ENCODE measurements at regions of chr19 and their contacts with region 1.

Region 1: GRCh38 chr19:18281082-18282020 is at the start of gene JUND:
- DNase-seq: peak; percentile 98
- H3K4me3 Mint-ChIP-seq: peak within 1 kb of the TSS; percentile 92
- H3K27ac Mint-ChIP-seq: peak within 1 kb of the TSS; percentile 98
- H3K4me1 Mint-ChIP-seq: peaks cover 39% of the 10 kb centered on the region
- H3K27me3 Mint-ChIP-seq: no peaks in the 10 kb centered on the region
- total RNA-seq, gene JUND: 462 and 464 TPM in 2 replicates

Region 2: DNA sequence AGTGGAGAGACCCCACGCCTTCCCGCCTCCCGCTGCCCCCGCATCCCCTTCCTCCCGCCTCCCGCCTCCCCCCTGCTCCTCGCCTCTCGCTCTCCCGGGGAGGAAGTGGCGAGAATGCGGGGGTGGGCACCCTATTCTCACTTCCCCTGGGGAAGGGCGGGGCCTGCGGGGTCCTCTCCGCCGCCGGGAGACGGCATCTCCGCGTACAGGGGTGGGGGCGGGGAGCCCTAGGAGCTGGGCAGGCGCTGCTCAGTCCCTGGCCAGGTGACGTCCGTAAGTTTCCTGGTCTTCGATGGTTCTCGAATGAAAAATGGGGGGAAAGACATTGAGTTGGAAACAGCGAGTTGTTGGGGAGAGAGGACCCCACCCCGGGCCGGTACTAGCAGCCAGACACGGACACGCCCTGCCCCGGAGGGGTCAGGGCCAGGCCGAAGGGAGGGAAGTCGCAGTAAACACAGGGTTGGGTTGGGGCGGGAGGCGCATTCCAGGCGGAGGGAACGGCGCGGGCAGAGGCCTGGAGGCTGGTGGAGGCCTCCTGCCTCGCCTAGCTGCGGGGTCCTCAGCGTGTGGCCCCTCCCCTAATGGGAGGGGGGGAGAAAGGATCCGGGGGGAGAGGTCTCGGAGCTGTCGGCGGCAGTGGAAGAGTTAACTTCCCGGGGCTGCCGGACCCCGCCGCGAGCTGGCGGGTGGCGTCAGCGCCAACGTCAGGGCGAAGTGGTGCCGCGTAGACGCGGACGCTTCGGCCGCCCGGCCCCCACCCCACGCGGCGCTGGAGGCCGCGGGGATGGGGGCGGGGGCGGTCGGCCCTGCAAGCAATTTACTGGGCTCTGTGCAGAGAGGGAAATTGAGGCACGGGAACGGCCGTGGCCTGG is 10.5 kb after region 1 on chr19:
- intact Hi-C with region 1: loop called (anchors 1 kb)
- DNase-seq: peak; percentile 82
- H3K4me3 Mint-ChIP-seq: peak overlapping the region; percentile 96
- H3K27ac Mint-ChIP-seq: peak overlapping the region; percentile 99
- H3K4me1 Mint-ChIP-seq: peaks cover 56% of the 10 kb centered on the region
- H3K27me3 Mint-ChIP-seq: no peaks in the 10 kb centered on the region

Region 3: DNA sequence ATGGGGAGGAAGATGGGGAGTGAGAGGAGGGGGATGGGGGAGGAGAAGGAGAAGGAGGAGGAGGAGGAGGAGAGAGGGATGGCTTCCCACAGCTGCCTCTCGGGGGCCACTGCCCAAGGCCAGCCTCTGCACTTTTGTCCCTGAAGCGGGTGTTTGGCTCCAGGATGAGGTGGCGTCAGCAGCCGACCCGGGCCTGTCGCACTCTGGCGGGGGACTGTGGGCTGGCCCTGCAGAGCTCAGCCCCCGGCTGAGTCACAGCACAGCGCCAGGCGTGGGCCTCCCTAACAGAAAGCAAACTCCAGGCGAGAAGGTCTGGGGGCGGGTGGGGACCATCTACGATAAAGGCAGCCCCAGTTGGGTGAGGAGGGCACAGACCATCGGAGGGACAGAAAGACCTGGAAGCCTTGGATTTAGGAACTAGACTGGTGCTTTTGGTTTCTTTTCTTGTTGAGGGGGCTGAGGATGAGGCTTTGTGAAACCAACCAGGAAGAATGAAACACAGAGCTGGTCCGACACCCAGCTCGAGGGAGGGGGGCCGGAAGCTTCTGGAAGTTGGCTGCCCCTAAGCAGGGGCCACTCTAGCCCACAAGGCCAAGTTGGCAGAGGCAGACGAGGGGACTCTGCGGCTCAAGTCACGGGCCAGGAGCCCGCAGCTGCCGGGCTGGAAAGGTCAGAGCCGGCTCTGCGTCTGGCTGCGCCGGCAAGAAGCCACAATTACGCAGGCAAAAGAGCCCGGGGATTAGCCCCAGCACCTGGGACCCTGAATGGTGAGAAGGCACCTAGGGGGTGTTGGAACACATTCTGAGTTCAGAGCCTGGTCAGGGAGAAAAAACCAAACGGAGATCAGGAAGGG is 23.3 kb after region 1 on chr19:
- intact Hi-C with region 1: loop called (anchors 1 kb)
- DNase-seq: peak; percentile 77
- H3K4me3 Mint-ChIP-seq: peak overlapping the region; percentile 88
- H3K27ac Mint-ChIP-seq: peak overlapping the region; percentile 94
- H3K4me1 Mint-ChIP-seq: peaks cover 32% of the 10 kb centered on the region
- H3K27me3 Mint-ChIP-seq: no peaks in the 10 kb centered on the region

Region 4: DNA sequence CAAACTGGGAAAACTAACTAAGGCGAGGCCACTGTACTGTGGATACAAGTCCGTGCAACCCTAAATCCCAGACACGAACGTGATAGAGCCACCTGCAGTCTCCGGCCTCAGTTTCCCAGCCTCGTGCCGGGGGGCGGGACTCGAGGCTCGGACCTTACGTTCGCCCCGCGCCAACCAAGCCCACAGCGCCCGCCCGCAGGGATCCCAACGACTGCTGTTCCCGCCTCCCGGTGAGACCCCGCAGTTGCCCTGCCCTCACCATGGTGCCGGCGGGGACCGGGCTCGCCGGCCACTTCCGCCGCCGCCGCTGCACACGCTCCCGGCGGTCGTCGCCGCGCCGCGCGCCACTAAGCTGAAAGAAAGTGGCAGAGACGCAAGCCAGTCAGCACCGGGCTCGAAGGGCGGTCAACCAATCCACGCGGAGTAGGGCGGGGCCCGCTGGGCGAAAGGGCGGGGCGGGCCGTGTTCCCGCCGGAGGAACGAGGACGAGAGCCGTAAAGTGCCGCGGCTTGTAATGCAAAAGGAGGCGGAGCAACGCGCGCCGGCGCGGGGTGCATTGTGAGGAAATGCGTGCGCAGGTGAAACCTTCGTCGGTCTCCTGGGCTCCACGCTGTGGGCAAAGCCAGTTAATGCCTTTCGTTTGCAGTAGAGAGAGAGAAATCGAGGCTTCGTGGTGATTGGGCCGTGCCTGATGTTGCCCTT is 41.6 kb after region 1 on chr19 and contains the start of gene LSM4:
- intact Hi-C with region 1: loop called (anchors 1 kb)
- DNase-seq: peak; percentile 99
- H3K4me3 Mint-ChIP-seq: peak within 1 kb of the TSS; percentile 94
- H3K27ac Mint-ChIP-seq: peak within 1 kb of the TSS; percentile 97
- H3K4me1 Mint-ChIP-seq: peaks cover 47% of the 10 kb centered on the region
- H3K27me3 Mint-ChIP-seq: no peaks in the 10 kb centered on the region
- total RNA-seq, gene LSM4: 198 and 208 TPM in 2 replicates

Region 5: DNA sequence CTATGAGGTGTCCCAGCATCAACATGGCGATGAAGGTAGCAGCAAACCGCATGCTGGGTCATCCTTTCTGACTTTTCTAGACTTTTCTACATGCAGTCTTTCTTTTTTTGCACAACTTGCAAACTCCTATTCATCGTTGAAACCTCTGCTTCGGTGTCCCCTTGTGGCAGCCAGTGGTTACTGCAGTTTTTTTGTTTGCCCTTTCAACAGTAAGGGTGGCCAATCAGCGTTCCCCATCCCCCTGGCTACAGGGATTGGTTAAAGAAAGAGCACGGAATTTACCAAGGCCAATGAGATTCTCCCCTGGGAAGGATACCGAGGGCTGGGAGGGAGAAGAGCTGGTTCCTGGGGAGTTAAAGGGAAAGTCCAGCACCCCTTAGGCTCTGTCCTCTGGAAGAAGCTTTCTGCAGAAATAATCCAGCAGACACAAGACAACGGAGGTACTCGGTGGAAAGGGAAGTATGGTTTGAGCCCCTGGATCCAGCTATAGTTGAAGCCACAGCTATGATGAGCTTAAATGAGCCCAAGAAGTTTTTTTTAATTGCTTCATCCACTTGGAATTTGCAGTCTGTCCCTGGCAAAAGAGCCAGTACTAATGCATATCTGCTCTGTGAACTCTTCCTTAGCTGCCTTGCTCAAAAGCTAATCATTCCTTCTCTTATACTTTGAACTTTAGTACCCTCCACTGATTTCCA is 47.1 kb after region 1 on chr19:
- intact Hi-C with region 1: loop called (anchors 1 kb)
- DNase-seq: peak; percentile 86
- H3K4me3 Mint-ChIP-seq: peak overlapping the region; percentile 63
- H3K27ac Mint-ChIP-seq: no peak overlapping the region
- H3K4me1 Mint-ChIP-seq: peaks cover 17% of the 10 kb centered on the region
- H3K27me3 Mint-ChIP-seq: no peaks in the 10 kb centered on the region

Region 6: GRCh38 chr19:18340190-18340989 is 59.0 kb after region 1 on chr19 and contains the start of gene PGPEP1:
- intact Hi-C with region 1: no loop called
- DNase-seq: peak; percentile 50
- H3K4me3 Mint-ChIP-seq: peak within 1 kb of the TSS; percentile 86
- H3K27ac Mint-ChIP-seq: peak within 1 kb of the TSS; percentile 89
- H3K4me1 Mint-ChIP-seq: peaks cover 6% of the 10 kb centered on the region
- H3K27me3 Mint-ChIP-seq: no peaks in the 10 kb centered on the region
- total RNA-seq, gene PGPEP1: 24.9 and 29.4 TPM in 2 replicates

Region 7: GRCh38 chr19:18415178-18415997 is 134.0 kb after region 1 on chr19:
- intact Hi-C with region 1: loop called (anchors 5 kb)
- DNase-seq: no peak
- H3K4me3 Mint-ChIP-seq: peak overlapping the region; percentile 52
- H3K27ac Mint-ChIP-seq: peak overlapping the region; percentile 88
- H3K4me1 Mint-ChIP-seq: peaks cover 43% of the 10 kb centered on the region
- H3K27me3 Mint-ChIP-seq: peaks cover 6% of the 10 kb centered on the region

Measured in activated T-helper 2 cell treated with anti-CD3 and anti-CD28 coated beads, Interferon-gamma antibody, Interleukin-2, Interleukin-4, amounts not matched to agents 10 μg/mL and 5 μg/mL and 100 μg/mL, durations not matched to agents 14 hours and 24 hours and 36 hours (primary cell).